ENCODE measurements at regions of chr7 and their contacts with region 1.

Region 1: GRCh38 chr7:111867348-111867931 is 305.1 kb upstream of the IMMP2L start:
- DNase-seq: no peak
- H3K4me3 ChIP-seq: no peak overlapping the region
- H3K27ac ChIP-seq: no peak overlapping the region
- H3K4me1 ChIP-seq: no peaks in the 10 kb centered on the region
- H3K27me3 ChIP-seq: no peaks in the 10 kb centered on the region

Region 2: DNA sequence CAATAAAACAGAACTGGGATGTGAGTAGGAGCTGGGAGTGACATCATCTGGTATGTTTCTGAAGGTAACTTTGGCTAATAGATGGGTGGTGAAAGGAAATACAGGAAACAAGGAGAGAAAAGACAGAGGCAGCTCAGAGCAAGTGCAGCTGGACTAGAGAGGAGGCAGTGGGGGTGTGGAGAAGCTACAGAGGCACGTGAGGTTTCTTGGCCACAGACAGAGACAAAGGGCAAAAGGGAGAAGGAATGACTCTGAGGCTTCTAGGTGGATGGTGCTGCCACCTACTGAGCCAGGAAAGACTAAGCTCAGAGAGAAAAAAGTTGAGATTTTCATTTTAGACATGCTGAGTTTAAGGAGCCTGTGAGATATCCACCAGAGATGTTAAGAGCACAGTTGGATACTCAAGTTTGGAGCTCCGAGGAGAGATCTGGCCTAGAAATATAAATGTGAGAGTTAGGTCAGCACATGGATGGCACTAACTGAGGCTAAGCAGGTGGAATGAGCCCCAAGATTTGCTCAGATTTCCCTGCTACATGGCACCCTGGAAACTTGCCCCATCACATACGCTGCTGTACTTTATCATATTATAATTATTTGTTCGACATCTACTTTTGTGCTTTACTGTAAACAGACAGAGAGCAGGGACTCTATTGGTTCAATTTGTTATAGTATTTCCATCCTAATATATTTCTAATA is 12.1 kb before region 1 on chr7:
- CTCF ChIA-PET with region 1: interaction called, 14 read pairs
- POLR2A ChIA-PET with region 1: no interaction called
- DNase-seq: peak; percentile 52 to 73 (median 69)
- H3K4me3 ChIP-seq: no peak overlapping the region
- H3K27ac ChIP-seq: no peak overlapping the region
- H3K4me1 ChIP-seq: peaks cover 0 to 3% (median 0%) of the 10 kb centered on the region in 4 experiments
- H3K27me3 ChIP-seq: no peaks in the 10 kb centered on the region

Measured in common myeloid progenitor, CD34-positive (primary cell).